ENCODE measurements at regions of chr15 and their contacts with region 1.

Region 1: DNA sequence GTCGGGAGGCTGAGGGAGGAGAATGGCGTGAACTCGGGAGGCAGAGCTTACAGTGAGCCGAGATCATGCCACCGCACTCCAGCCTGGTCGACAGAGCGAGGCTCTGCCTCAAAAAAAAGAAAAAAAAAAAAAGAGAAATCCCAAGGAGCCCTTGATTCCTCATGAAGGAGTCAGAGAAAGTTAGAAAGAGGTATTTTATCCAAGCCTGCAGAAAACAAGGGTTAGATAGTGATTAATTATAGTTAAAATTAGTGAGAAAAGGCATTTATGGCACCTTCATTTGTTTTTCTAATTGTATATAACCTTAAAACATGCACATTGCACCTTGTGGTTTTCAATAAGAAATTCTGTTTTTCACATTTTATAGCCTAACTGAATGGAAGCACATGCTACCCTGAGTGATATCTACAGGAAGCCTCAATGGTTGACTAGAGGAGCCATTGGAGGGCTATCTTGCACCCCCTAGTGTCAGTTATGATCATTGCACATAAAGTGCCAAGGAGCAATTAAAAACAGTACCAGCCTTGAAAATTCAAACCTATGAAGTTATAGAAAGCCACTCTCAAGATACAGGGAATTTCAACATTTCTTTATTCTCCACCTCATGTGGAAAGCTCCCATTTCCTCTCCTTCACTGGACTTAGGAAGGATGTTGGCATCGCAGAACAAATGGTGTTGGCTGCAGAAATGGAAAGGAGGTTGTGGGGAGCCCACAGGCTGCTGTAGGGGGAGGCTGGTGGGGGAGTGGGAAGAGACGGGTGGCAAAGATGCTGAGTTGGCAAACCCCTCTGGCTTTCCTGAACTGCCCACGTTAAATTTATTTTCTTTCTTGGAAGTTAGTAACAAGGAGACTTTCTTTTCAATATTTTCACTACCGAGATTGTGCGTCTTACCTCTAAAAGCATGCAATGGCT is 48.5 kb downstream of the ITGA11 start:
- DNase-seq: no peak
- ATAC-seq: peak; percentile 62

Region 2: DNA sequence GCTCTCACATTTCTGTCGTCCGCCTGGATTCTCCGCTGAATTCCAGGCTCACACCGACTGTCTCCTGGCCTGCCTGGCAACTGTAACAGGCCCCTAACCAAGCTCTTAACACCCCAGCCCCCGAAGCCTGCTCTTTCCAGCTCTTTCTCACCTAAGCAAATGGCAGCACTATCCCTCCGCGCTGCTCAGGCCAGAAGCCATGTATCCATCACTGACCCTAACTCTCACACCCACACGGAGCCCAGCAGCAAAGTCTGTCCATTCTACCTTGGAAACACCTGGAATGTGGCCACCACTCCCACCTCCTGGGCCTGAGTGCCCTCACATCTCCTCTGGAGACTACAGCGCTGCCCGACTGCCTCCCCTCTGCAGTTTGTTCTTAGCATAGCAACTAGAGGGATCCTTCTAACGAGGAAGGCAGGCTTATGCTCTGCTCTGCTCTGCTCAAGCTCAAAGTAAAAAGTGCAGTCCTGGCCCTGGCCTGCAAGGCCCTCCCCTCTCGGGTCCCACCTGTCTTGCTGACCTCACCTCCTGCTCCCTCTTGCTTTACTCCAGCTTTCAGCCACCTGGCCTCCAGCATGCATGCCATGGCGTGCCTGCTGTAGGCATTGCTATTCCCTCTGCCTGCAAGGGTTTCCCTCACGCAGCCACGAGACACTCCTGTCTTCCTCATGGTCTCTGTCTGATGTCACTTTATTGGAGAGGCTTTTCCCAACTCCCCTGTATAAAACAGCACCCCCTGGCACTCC is 78.7 kb before region 1 on chr15:
- intact Hi-C with region 1: loop called in 1 of 2 experiments (anchors 10 kb)
- DNase-seq: no peak
- ATAC-seq: no peak